ENCODE measurements at regions of chr5 and their contacts with region 1.

Region 1: GRCh38 chr5:43227655-43228054 is 35.6 kb downstream of the NIM1K start:
- DNase-seq: peak; percentile 60 to 71
- ATAC-seq: peak; percentile 73
- H3K4me3 ChIP-seq: no peak overlapping the region
- H3K27ac ChIP-seq: no peak overlapping the region
- H3K4me1 ChIP-seq: no peaks in the 10 kb centered on the region
- CTCF ChIP-seq: peak; percentile 70
- EP300 ChIP-seq: no peak
- POLR2A ChIP-seq: no peak
- RAD21 ChIP-seq: peak; percentile 72 to 77

Region 2: GRCh38 chr5:43066799-43067741 is 160.6 kb before region 1 on chr5:
- CTCF ChIA-PET with region 1: no interaction called
- POLR2A ChIA-PET with region 1: no interaction called
- DNase-seq: peak; percentile 59 to 93
- ATAC-seq: peak; percentile 69 to 78
- H3K4me3 ChIP-seq: peak overlapping the region; percentile 57
- H3K27ac ChIP-seq: peak overlapping the region; percentile 92 to 93
- H3K4me1 ChIP-seq: peaks cover 23% of the 10 kb centered on the region
- CTCF ChIP-seq: no peak
- EP300 ChIP-seq: no peak
- POLR2A ChIP-seq: no peak; the same call in none of the 2 replicates
- RAD21 ChIP-seq: no peak

Region 3: DNA sequence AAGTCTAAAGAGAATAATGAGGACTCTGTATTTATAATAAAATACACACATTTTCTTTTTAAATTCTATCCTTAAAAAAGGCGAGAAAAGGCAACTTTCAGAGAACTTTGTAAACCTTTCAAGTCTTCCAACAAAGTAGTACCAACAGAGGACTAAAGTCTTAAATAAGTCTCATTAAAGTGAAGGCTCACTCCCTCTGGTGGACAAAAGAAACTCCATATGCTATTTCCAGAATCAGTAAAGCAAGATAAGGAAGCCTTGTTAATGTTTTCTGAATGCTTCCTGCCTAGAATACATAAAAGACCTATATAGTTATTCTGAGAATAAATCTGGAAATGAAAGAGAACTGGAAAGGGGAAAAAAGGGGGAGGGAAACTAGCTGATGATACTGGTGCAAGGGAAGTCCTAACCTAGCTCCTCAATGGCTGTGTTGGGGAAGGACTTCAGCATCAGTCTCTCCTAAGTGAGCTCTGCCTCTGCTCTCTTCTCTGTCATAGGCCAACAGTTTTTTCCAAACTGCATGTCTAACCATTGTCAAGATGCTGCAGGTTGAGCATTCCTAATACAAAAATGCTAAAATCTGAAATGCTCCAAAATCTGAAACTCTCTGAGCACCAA is 78.4 kb after region 1 on chr5:
- CTCF ChIA-PET with region 1: interaction called, 15 read pairs
- POLR2A ChIA-PET with region 1: no interaction called
- DNase-seq: peak; percentile 35 to 74
- ATAC-seq: peak; percentile 73 to 89
- H3K4me3 ChIP-seq: no peak overlapping the region
- H3K27ac ChIP-seq: no peak overlapping the region
- H3K4me1 ChIP-seq: peaks cover 38% of the 10 kb centered on the region
- CTCF ChIP-seq: peak; percentile 70
- EP300 ChIP-seq: no peak
- POLR2A ChIP-seq: no peak
- RAD21 ChIP-seq: peak; percentile 49 to 57; a peak in 4 of 5 replicates

Measured in A549 (cell line).